CD8-positive, alpha-beta T cell (primary cell): ENCODE measurements at regions of chr4 and their contacts with region 1.

Region 1: DNA sequence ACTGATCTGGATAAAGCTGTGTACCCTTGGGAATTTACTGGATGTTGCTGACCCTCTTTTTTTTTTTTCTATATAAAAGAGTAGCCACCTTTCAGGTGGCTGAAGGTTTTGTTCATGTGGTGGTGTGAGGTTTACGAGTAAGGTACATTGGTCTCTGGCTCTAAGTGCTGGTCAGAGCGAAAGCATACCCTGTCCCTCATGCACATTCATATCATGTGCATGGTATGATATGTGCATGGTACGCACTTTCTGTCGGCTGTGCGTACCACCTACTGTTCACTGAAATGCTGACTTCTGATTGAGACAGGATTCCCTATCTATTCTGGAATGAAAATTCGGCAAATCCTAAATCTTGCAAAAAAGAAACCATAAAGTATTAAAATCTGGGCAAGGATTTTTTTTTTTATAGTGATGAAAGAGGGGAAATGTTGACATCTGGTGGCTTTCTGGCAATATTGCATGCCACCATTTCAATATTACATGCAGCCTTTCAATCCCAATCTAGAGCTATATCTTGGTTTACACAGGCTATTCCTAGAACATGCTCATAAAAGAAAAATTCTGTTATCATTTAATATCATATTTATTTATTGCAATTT is 32.8 kb downstream of the FAM149A start:
- DNase-seq: peak in 2 of 9 experiments; percentile 23 to 26
- ATAC-seq: no peak
- H3K4me3 ChIP-seq: no peak overlapping the region
- H3K4me3 Mint-ChIP-seq: no peak overlapping the region
- H3K27ac ChIP-seq: no peak overlapping the region
- H3K27ac Mint-ChIP-seq: no peak overlapping the region
- H3K4me1 ChIP-seq: no peaks in the 10 kb centered on the region
- H3K4me1 Mint-ChIP-seq: no peaks in the 10 kb centered on the region
- H3K27me3 ChIP-seq: peaks cover 0 to 3% of the 10 kb centered on the region in 2 experiments
- H3K27me3 Mint-ChIP-seq: peaks cover 12% of the 10 kb centered on the region
- CTCF ChIP-seq: peak; percentile 54

Region 2: GRCh38 chr4:185634066-185634652 is 503.1 kb before region 1 on chr4:
- CTCF ChIA-PET with region 1: no interaction called
- POLR2A ChIA-PET with region 1: no interaction called
- intact Hi-C with region 1: loop called in 1 of 2 experiments (anchors 10 kb)
- DNase-seq: no peak
- ATAC-seq: no peak
- H3K4me3 ChIP-seq: no peak overlapping the region
- H3K4me3 Mint-ChIP-seq: no peak overlapping the region
- H3K27ac ChIP-seq: no peak overlapping the region
- H3K27ac Mint-ChIP-seq: no peak overlapping the region
- H3K4me1 ChIP-seq: no peaks in the 10 kb centered on the region
- H3K4me1 Mint-ChIP-seq: peaks cover 3% of the 10 kb centered on the region
- H3K27me3 ChIP-seq: peaks cover 0 to 3% of the 10 kb centered on the region in 2 experiments
- H3K27me3 Mint-ChIP-seq: peaks cover 14% of the 10 kb centered on the region
- CTCF ChIP-seq: no peak

Region 3: DNA sequence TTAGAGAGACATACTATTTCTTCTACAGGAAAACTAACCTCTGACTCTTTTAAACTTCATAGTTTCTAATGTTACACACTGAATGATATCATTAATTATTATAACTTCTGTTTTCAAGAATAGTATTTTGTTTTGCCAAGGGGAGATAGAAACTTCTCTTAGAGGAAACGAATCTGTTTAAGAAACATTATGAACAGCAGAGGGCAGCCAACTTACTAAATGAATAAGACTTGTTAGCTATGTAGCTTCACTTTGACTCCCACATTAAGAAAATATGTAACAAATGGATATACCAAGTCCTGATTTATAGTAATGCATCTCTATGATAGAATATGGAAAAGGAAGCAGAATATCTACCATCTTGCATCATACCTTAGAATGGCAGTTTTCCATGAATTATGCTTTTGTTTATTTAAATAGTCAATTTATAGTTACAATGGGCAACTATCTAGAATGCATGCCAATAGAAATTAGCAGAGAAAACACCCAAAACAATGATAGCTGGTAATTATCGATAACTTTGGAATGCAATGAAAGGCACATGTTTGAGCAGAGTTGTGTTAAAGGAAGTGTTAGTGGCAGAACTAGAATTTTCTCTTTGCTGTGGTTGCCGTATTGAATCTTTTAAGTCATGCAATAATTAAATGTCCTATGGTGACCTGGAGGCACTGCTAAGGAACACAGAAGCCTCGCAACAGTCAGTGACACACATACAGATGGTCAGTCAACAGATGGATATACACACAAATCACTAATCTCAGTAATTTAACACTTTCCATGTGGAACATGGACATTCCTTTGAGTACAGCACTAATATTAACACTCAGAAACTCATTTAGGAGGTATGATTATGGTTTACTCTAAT is 496.3 kb before region 1 on chr4:
- CTCF ChIA-PET with region 1: no interaction called
- POLR2A ChIA-PET with region 1: no interaction called
- intact Hi-C with region 1: loop called (anchors 2 to 10 kb)
- DNase-seq: peak in 2 of 9 experiments; percentile 24 to 32
- ATAC-seq: no peak
- H3K4me3 ChIP-seq: no peak overlapping the region
- H3K4me3 Mint-ChIP-seq: no peak overlapping the region
- H3K27ac ChIP-seq: no peak overlapping the region
- H3K27ac Mint-ChIP-seq: no peak overlapping the region
- H3K4me1 ChIP-seq: no peaks in the 10 kb centered on the region
- H3K4me1 Mint-ChIP-seq: peaks cover 3% of the 10 kb centered on the region
- H3K27me3 ChIP-seq: peaks cover 0 to 3% of the 10 kb centered on the region in 2 experiments
- H3K27me3 Mint-ChIP-seq: peaks cover 29% of the 10 kb centered on the region
- CTCF ChIP-seq: no peak

Region 4: DNA sequence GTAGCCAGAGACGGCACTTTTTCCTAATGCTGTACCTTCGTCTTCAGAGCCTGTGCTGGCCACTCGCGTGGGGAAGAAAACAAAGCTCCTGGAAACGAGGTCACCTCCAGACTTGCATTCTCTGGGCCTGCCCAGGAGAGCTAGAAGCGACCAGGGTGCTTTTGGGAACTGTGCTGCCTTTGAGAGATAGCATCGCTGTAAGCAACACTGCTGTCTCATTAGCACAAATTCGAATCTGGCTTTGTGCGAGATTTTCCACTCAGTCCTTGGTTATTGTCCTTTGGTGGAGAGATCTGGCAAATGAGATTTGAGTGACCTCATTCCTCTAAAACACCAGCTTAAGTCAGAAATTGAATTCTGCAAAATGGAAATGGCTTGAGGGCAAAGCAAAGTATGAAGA is 134.4 kb before region 1 on chr4:
- CTCF ChIA-PET with region 1: no interaction called
- POLR2A ChIA-PET with region 1: no interaction called
- intact Hi-C with region 1: no loop called
- DNase-seq: no peak
- ATAC-seq: no peak
- H3K4me3 ChIP-seq: no peak overlapping the region
- H3K4me3 Mint-ChIP-seq: no peak overlapping the region
- H3K27ac ChIP-seq: no peak overlapping the region
- H3K27ac Mint-ChIP-seq: no peak overlapping the region
- H3K4me1 ChIP-seq: no peaks in the 10 kb centered on the region
- H3K4me1 Mint-ChIP-seq: no peaks in the 10 kb centered on the region
- H3K27me3 ChIP-seq: no peaks in the 10 kb centered on the region
- H3K27me3 Mint-ChIP-seq: no peaks in the 10 kb centered on the region
- CTCF ChIP-seq: no peak

Region 5: DNA sequence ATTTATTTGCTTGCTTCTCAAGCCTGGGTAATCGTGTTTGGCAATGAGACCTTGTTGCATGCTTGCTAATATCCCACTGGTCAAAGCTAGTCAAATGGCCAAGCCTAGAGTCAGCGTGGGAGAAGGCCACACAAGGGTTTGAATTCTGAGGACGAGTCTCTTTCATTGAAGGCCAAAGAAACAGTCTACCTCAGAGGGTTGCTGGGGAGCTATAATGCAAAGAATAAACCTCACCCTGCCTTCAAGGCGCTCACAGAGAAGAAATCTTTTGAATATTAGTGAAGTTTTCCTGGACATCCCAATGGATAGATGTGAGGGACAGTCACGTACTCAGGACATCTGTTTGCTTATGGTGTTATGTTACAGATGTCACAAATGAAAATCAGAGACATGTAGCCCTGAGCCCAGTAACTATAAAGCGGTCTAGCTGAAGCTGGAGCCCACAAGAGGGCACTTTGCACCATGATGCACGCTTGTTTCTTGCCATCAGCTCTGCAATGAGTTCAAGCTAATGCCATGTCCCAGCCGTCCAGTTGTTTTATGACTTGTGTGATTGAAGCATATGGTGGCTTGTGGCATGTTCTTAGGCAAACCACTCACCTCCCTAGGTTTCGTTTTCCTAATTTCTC is 69.4 kb before region 1 on chr4:
- CTCF ChIA-PET with region 1: interaction called, 11 read pairs
- POLR2A ChIA-PET with region 1: no interaction called
- intact Hi-C with region 1: loop called (anchors 2 to 5 kb)
- DNase-seq: peak in 7 of 9 experiments; percentile 9 to 64 (median 27)
- ATAC-seq: peak; percentile 64
- H3K4me3 ChIP-seq: peak overlapping the region; percentile 46 to 69
- H3K4me3 Mint-ChIP-seq: peak overlapping the region; percentile 83
- H3K27ac ChIP-seq: no peak overlapping the region
- H3K27ac Mint-ChIP-seq: no peak overlapping the region
- H3K4me1 ChIP-seq: peaks cover 11% of the 10 kb centered on the region
- H3K4me1 Mint-ChIP-seq: peaks cover 25% of the 10 kb centered on the region
- H3K27me3 ChIP-seq: no peaks in the 10 kb centered on the region
- H3K27me3 Mint-ChIP-seq: peaks cover 11% of the 10 kb centered on the region
- CTCF ChIP-seq: no peak